IMR-90 (cell line): ENCODE measurements at regions of chr18 and their contacts with region 1.

Region 1: DNA sequence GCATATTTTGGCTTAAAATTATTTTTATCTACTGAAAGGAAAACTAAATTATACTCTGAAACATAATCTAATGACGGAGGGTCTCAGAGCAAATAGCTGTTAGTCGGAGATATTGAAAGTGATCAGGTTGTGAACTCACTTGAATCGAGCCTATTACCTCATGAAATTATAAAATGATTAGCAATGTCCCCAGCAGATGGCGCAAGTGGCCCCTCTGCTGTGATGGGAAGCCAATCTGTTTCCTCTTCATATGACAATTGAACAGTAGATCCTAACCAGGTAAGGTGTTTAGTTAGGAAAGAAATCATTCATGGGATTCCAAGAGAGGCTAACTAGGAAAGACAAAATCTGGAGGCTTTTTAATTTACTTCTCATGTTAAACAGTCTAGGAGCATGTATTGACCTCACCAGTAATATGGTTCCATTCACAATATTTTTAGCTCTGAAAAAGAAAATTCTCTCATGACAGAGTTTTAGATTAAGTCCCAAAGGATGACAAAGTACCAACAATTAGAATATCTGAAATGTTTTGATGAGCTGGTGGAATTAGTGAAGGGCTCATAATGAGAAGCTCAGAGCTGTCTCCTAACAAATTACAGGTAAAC is 29.9 kb upstream of the MPPE1 start:
- DNase-seq: peak; percentile 61
- ATAC-seq: peak; percentile 86
- H3K4me3 ChIP-seq: no peak overlapping the region
- H3K27ac ChIP-seq: no peak overlapping the region
- H3K4me1 ChIP-seq: peaks cover 2% of the 10 kb centered on the region; the same call in 1 of the 2 replicates
- H3K27me3 ChIP-seq: no peaks in the 10 kb centered on the region
- CTCF ChIP-seq: peak; percentile 84
- POLR2A ChIP-seq: no peak
- RAD21 ChIP-seq: peak; percentile 89

Region 2: GRCh38 chr18:11654736-11655605 is 283.0 kb before region 1 on chr18:
- CTCF ChIA-PET with region 1: no interaction called
- POLR2A ChIA-PET with region 1: no interaction called
- dilution Hi-C with region 1: no loop called
- in situ Hi-C with region 1: no loop called
- intact Hi-C with region 1: loop called (anchors 5 kb)
- DNase-seq: peak; percentile 4
- ATAC-seq: peak; percentile 93
- H3K4me3 ChIP-seq: no peak overlapping the region
- H3K27ac ChIP-seq: no peak overlapping the region
- H3K4me1 ChIP-seq: no peaks in the 10 kb centered on the region
- H3K27me3 ChIP-seq: peaks cover 44% of the 10 kb centered on the region
- CTCF ChIP-seq: peak; percentile 64
- POLR2A ChIP-seq: no peak
- RAD21 ChIP-seq: peak; percentile 75

Region 3: GRCh38 chr18:11710578-11710977 is 227.4 kb before region 1 on chr18:
- CTCF ChIA-PET with region 1: no interaction called
- POLR2A ChIA-PET with region 1: no interaction called
- dilution Hi-C with region 1: no loop called
- in situ Hi-C with region 1: no loop called
- intact Hi-C with region 1: no loop called
- DNase-seq: no peak
- ATAC-seq: no peak
- H3K4me3 ChIP-seq: no peak overlapping the region
- H3K27ac ChIP-seq: no peak overlapping the region
- H3K4me1 ChIP-seq: no peaks in the 10 kb centered on the region
- H3K27me3 ChIP-seq: peaks cover 17% of the 10 kb centered on the region
- CTCF ChIP-seq: no peak
- POLR2A ChIP-seq: no peak
- RAD21 ChIP-seq: no peak

Region 4: GRCh38 chr18:11989973-11990380 is 52.0 kb after region 1 on chr18:
- CTCF ChIA-PET with region 1: interaction called, 109 read pairs
- POLR2A ChIA-PET with region 1: interaction called, 7 read pairs
- dilution Hi-C with region 1: no loop called
- in situ Hi-C with region 1: loop called (anchors 5 kb)
- intact Hi-C with region 1: loop called (anchors 1 kb)
- DNase-seq: no peak
- ATAC-seq: no peak
- H3K4me3 ChIP-seq: no peak overlapping the region
- H3K27ac ChIP-seq: no peak overlapping the region
- H3K4me1 ChIP-seq: peaks cover 7% of the 10 kb centered on the region
- H3K27me3 ChIP-seq: no peaks in the 10 kb centered on the region
- CTCF ChIP-seq: no peak
- POLR2A ChIP-seq: no peak
- RAD21 ChIP-seq: no peak

Region 5: GRCh38 chr18:11995445-11996189 is 57.6 kb after region 1 on chr18:
- CTCF ChIA-PET with region 1: interaction called, 109 read pairs
- POLR2A ChIA-PET with region 1: interaction called, 7 read pairs
- dilution Hi-C with region 1: no loop called
- in situ Hi-C with region 1: loop called (anchors 5 kb)
- intact Hi-C with region 1: loop called (anchors 1 kb)
- DNase-seq: peak; percentile 77
- ATAC-seq: peak; percentile 88
- H3K4me3 ChIP-seq: no peak overlapping the region
- H3K27ac ChIP-seq: no peak overlapping the region
- H3K4me1 ChIP-seq: peaks cover 11% of the 10 kb centered on the region
- H3K27me3 ChIP-seq: no peaks in the 10 kb centered on the region
- CTCF ChIP-seq: peak; percentile 90
- POLR2A ChIP-seq: 0 out of 2 replicates have a peak, but pooled peaks have one; percentile 22
- RAD21 ChIP-seq: peak; percentile 95

Region 6: DNA sequence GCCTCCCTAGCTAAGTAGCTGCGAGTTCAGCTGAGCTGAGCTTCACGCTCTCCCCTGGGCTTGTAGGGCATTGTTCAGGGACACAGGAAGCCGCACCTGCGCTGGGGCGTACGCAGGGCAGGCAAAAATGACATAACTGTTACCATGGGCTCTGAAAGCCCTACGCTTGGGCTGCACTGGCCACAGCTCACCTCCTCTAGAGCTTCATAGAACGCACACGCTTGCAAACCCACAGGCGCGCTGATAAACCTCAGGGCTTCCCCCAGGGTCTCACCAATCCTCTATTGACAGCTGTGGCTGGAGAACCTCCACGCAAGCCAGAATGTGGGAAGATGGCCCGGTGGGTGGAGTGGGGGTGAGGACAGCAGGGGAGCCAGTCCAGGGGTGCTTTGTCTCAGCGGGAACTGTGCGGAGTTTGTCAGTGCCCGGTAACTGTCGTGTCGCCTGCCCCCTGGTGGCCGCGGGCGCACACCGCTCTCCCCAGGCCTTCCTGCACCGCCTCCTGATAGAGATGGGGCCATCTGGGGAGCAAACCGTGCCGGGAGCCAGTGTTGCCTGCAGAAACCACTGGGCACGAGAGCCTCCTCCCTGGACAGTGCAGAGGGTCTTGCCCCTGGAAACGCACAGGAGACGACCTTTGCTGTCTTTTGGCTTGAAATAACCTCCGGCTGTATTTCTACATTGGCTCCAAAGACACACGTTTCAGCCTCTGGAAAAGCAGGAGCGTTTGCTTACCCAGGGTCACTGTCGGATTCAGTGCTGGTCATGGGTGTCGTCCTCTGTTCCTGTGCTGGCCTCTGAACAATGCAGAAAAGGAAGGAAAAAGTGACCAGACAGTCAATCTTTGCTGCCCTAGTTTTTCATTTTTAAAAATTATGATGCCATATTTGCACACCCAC is 299.2 kb after region 1 on chr18:
- CTCF ChIA-PET with region 1: no interaction called
- POLR2A ChIA-PET with region 1: no interaction called
- dilution Hi-C with region 1: no loop called
- in situ Hi-C with region 1: no loop called
- intact Hi-C with region 1: loop called (anchors 10 kb)
- DNase-seq: peak; percentile 36
- ATAC-seq: peak; percentile 96
- H3K4me3 ChIP-seq: no peak overlapping the region
- H3K27ac ChIP-seq: no peak overlapping the region
- H3K4me1 ChIP-seq: peaks cover 6% of the 10 kb centered on the region
- H3K27me3 ChIP-seq: peaks cover 10% of the 10 kb centered on the region
- CTCF ChIP-seq: peak; percentile 76
- POLR2A ChIP-seq: no peak
- RAD21 ChIP-seq: peak; percentile 57